CD4-positive, alpha-beta T cell (primary cell): ENCODE measurements at regions of chr1 and their contacts with region 1.

Region 1: DNA sequence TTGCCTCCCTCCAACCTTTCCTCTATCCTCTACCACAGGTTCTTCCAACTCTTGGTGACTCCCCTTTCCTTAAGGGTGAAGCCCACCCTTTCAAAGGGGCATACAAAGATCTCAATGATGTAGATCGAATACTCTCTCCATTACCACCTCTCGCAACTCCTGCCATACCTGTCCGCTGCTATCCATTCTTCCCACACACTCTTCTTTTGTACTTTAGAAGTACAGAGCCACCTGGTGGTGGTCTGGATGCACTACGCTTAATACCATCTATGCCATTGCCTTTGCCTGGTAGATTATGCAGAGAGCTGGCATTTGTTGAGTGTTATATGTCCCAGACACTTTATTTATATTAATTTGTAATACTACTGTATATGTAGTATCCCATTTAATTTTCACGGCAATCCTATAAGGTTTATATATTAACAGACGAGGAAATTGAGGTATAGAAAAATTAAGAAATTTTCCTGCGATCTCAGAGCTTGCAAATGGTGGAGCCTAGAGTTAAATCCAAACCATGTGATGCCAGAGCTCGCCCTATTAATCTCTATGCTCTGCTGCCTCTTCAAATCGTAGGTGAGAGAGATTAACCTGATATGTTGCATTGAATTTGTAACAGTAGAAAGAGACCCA is 22.9 kb downstream of the TSHB start:
- DNase-seq: peak; percentile 10 to 78 (median 52)
- ATAC-seq: peak; percentile 98
- H3K4me3 ChIP-seq: no peak overlapping the region
- H3K4me3 Mint-ChIP-seq: no peak overlapping the region
- H3K27ac ChIP-seq: no peak overlapping the region
- H3K27ac Mint-ChIP-seq: no peak overlapping the region
- H3K4me1 ChIP-seq: peaks cover 6% of the 10 kb centered on the region
- H3K4me1 Mint-ChIP-seq: peaks cover 6% of the 10 kb centered on the region
- H3K27me3 ChIP-seq: no peaks in the 10 kb centered on the region
- H3K27me3 Mint-ChIP-seq: no peaks in the 10 kb centered on the region
- CTCF ChIP-seq: peak; percentile 97

Region 2: DNA sequence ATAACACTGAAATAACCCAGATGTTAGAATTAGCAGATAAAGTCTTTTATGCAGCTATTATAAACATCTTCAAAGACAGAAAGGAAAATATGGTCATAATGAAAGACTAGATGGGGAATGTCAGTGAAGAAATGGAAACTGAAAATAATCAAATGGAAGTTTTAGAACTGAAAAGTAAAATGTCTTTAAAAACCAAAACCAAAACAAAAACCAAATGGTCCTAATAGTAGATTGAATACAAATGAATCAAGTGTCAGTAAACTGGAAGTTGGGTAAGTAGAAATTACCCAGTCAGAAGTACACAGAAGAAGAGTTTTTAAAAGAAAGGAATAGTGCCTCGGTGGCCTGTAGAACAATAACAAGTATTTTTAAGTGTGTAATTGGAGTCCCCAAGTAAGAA is 125.2 kb before region 1 on chr1:
- CTCF ChIA-PET with region 1: no interaction called
- POLR2A ChIA-PET with region 1: no interaction called
- intact Hi-C with region 1: no loop called
- DNase-seq: no peak
- ATAC-seq: no peak
- H3K4me3 ChIP-seq: no peak overlapping the region
- H3K4me3 Mint-ChIP-seq: no peak overlapping the region
- H3K27ac ChIP-seq: no peak overlapping the region
- H3K27ac Mint-ChIP-seq: no peak overlapping the region
- H3K4me1 ChIP-seq: no peaks in the 10 kb centered on the region
- H3K4me1 Mint-ChIP-seq: no peaks in the 10 kb centered on the region
- H3K27me3 ChIP-seq: peaks cover 4 to 34% of the 10 kb centered on the region in 2 experiments
- H3K27me3 Mint-ChIP-seq: peaks cover 54% of the 10 kb centered on the region
- CTCF ChIP-seq: no peak

Region 3: GRCh38 chr1:114979278-114979891 is 73.2 kb before region 1 on chr1:
- CTCF ChIA-PET with region 1: interaction called, 5 read pairs
- POLR2A ChIA-PET with region 1: no interaction called
- intact Hi-C with region 1: loop called (anchors 1 kb)
- DNase-seq: peak; percentile 53 to 84 (median 66)
- ATAC-seq: peak; percentile 60
- H3K4me3 ChIP-seq: no peak overlapping the region
- H3K4me3 Mint-ChIP-seq: no peak overlapping the region
- H3K27ac ChIP-seq: no peak overlapping the region
- H3K27ac Mint-ChIP-seq: no peak overlapping the region
- H3K4me1 ChIP-seq: no peaks in the 10 kb centered on the region
- H3K4me1 Mint-ChIP-seq: no peaks in the 10 kb centered on the region
- H3K27me3 ChIP-seq: peaks cover 0 to 9% of the 10 kb centered on the region in 2 experiments
- H3K27me3 Mint-ChIP-seq: peaks cover 15% of the 10 kb centered on the region
- CTCF ChIP-seq: peak; percentile 96

Region 4: DNA sequence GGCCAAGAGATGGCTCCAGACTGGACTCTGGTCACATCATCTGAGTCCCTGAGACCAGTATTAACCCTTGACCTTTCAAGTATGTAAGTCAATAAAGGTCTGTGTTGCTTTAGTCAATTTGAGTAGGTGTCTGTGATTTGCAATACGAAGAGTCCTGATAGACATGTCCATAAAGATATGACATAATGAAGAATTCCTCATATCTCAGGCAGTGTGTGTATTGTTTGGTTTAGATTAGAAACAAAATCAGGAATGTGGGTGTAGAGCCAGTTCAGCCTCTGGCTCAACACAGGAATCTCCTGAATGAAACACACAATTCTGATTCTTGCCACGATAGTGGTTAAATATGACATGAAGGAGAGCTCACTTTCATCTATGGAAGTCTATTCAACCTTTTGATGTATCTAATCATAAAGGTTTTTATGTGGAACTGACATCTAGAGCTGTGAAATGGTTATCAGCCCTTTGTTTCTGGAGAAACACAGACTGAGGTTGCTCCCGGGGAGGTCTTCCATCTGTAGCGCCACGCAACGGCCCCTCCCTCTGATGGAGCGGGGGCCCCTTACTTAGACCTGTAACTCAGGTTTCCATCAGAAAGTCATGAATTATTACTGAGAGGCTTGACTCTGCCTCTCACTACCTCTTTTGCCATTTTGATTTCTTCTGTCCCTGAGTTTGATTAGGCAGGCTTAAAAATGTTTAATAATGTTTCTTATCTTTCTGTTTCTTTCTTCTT is 17.2 kb after region 1 on chr1:
- CTCF ChIA-PET with region 1: interaction called, 15 read pairs
- POLR2A ChIA-PET with region 1: no interaction called
- intact Hi-C with region 1: no loop called
- DNase-seq: no peak
- ATAC-seq: no peak
- H3K4me3 ChIP-seq: no peak overlapping the region
- H3K4me3 Mint-ChIP-seq: no peak overlapping the region
- H3K27ac ChIP-seq: no peak overlapping the region
- H3K27ac Mint-ChIP-seq: no peak overlapping the region
- H3K4me1 ChIP-seq: peaks cover 36% of the 10 kb centered on the region
- H3K4me1 Mint-ChIP-seq: peaks cover 43% of the 10 kb centered on the region
- H3K27me3 ChIP-seq: no peaks in the 10 kb centered on the region
- H3K27me3 Mint-ChIP-seq: no peaks in the 10 kb centered on the region
- CTCF ChIP-seq: no peak

Region 5: DNA sequence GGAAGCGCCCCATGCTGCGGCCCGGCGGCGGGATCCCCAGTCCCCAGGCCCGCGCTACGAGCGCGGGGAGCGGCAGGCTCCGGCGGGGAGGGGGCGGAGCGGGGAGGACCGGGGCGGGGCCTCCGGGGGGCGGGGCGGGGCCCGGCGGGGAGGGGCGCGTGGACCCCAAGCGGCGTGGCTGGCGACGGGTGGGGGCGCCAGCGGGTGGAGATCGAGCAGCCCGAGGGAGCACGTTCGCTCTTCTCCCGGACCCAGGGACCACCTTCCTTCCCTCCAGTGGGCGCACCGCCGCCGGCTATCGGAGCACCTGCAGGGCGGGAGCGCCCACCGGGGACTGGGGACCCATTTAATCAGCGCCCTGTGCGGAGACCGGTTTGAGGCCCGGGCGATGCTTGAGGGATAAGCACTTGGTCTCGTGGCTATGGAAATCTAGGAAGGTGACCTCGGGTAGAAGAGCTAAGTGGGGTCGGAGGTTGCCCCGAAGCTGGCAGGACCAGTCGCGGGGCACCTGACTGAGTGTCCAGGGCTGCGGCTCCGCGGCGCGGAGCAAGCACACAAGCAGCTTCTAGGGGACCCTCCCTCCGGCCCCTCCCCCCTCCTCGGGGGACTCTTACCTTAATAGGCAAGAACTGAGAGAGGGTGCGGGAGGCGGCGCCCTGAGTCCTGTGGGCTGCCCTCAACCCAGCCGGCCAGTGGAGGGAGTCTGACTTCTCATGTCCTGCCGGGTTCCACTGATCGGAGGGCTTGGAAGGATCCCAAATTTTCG is 37.0 kb after region 1 on chr1 and contains the start of gene TSPAN2:
- CTCF ChIA-PET with region 1: interaction called, 6 read pairs
- POLR2A ChIA-PET with region 1: interaction called, 3 read pairs
- intact Hi-C with region 1: loop called in 1 of 2 experiments (anchors 5 kb)
- DNase-seq: peak; percentile 31 to 80 (median 52)
- ATAC-seq: peak; percentile 85
- H3K4me3 ChIP-seq: peak within 1 kb of the TSS; percentile 78
- H3K4me3 Mint-ChIP-seq: peak within 1 kb of the TSS; percentile 88
- H3K27ac ChIP-seq: no peak within 1 kb of the TSS
- H3K27ac Mint-ChIP-seq: peak within 1 kb of the TSS; percentile 73
- H3K4me1 ChIP-seq: peaks cover 42% of the 10 kb centered on the region
- H3K4me1 Mint-ChIP-seq: peaks cover 54% of the 10 kb centered on the region
- H3K27me3 ChIP-seq: no peaks in the 10 kb centered on the region
- H3K27me3 Mint-ChIP-seq: peaks cover 4% of the 10 kb centered on the region
- CTCF ChIP-seq: no peak
- total RNA-seq, gene TSPAN2: 0.95 to 1.6 TPM

Region 6: DNA sequence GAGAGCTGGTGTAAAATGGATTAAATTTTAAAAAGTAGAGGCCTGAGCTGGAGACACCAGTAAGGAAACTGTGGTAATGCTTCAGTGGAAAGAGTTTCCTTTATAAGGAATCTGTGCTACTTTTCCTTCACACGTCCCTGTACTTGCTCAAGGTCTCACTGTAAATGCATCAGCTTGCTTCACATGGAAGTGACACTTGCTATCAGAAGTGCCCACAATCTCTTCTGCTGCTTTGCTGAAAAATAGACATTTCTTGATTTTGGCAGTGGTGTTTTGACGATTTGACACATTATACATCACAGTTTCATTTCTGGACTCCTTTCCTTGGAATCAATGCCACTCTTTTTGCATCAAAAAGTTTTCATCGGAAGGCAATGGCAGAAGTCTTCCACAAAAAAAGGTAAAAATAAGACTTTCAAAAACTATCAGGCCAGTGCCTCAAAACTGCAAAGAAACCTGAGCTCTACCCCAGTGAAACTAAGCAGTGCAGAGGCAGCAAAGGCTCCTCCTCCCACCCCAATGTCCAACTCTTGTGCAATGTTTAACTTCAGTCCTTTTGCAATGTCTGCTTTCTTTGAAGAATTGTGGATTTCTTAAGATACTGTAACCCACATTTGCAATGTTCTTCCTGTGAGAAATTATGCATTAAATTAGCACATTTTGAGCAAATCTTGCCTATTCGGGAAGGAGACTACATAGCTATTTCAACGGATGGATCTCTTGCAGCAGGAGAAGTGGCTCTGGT is 55.1 kb after region 1 on chr1:
- CTCF ChIA-PET with region 1: interaction called, 11 read pairs
- POLR2A ChIA-PET with region 1: no interaction called
- intact Hi-C with region 1: loop called (anchors 2 kb)
- DNase-seq: no peak
- ATAC-seq: no peak
- H3K4me3 ChIP-seq: no peak overlapping the region
- H3K4me3 Mint-ChIP-seq: no peak overlapping the region
- H3K27ac ChIP-seq: no peak overlapping the region
- H3K27ac Mint-ChIP-seq: no peak overlapping the region
- H3K4me1 ChIP-seq: peaks cover 12% of the 10 kb centered on the region
- H3K4me1 Mint-ChIP-seq: peaks cover 19% of the 10 kb centered on the region
- H3K27me3 ChIP-seq: no peaks in the 10 kb centered on the region
- H3K27me3 Mint-ChIP-seq: no peaks in the 10 kb centered on the region
- CTCF ChIP-seq: no peak

Region 7: GRCh38 chr1:115112496-115113375 is 60.2 kb after region 1 on chr1:
- CTCF ChIA-PET with region 1: interaction called, 11 read pairs
- POLR2A ChIA-PET with region 1: interaction called, 3 read pairs
- intact Hi-C with region 1: loop called (anchors 2 kb)
- DNase-seq: peak; percentile 26 to 77 (median 53)
- ATAC-seq: peak; percentile 54
- H3K4me3 ChIP-seq: no peak overlapping the region
- H3K4me3 Mint-ChIP-seq: no peak overlapping the region
- H3K27ac ChIP-seq: no peak overlapping the region
- H3K27ac Mint-ChIP-seq: no peak overlapping the region
- H3K4me1 ChIP-seq: peaks cover 20% of the 10 kb centered on the region
- H3K4me1 Mint-ChIP-seq: peaks cover 14% of the 10 kb centered on the region
- H3K27me3 ChIP-seq: no peaks in the 10 kb centered on the region
- H3K27me3 Mint-ChIP-seq: no peaks in the 10 kb centered on the region
- CTCF ChIP-seq: peak; percentile 99